B cell (primary cell): ENCODE measurements at regions of chr6 and their contacts with region 1.

Region 1: DNA sequence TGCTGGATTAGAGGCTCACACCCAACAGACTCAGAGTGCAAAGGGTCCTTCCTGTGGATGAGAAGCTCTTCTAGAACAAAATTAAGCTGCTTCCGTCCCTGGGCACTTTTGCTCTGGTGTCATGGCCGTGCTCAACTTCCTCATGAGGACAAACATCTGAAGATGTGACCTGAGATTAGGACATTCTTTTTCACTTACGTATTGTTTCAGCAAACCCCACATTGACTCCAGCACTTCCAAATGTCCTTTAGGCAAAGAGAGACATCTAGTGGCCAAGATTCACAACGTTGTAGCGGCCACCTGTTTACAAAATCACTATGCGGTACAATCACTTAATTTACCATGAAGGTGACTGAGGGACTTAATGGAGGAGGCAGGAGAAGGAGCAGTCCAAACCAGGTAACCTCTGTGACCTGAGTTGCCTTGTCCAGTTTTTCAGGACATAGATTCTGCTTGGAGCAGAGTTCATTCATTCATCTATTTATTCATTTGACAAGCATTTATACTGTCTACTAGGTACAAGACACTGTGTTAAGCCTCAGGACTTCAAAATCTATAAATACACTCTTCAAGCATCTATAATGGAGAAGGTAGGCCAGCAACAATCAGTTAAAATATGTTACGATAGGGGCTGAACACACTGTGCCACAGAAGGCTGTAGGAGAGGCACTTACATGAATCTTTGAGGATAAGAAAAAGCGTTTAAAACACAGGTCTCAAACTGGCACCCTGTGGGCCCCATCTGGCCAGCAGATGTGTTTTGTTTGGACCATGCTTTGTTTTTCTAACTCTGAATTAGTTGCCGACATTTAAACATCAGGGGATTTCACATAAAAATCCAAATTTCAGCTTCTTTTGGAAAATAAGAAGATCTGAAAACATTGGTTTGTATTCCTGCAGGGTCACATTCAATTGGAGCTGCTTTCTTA is 5.6 kb upstream of the ADGRF1 start:
- DNase-seq: peak; percentile 35
- ATAC-seq: peak; percentile 17
- H3K4me3 ChIP-seq: no peak overlapping the region
- H3K4me3 Mint-ChIP-seq: no peak overlapping the region
- H3K27ac ChIP-seq: no peak overlapping the region
- H3K27ac Mint-ChIP-seq: no peak overlapping the region
- H3K4me1 ChIP-seq: no peaks in the 10 kb centered on the region
- H3K4me1 Mint-ChIP-seq: peaks cover 2% of the 10 kb centered on the region
- H3K27me3 ChIP-seq: no peaks in the 10 kb centered on the region
- H3K27me3 Mint-ChIP-seq: peaks cover 11% of the 10 kb centered on the region
- CTCF ChIP-seq: peak; percentile 65

Region 2: DNA sequence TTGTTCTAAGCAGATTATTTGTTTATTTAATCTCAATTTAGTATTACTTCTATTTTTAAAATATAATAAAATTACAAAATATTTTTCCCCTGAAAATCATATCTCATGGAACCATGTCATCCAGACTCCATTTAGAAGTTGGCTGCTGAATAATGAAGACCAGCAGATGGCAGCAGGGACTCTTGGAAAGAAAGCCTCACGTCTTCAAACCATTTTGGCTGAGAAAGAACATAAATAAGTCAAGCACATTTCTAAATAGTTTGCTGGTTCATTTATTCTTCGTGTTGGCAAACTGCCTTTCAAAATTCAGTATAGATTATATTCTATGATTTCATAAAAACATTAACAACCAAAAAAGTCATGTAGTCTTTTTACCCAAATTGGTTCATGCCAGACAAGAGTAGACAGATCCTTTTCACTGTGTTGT is 628.2 kb before region 1 on chr6:
- CTCF ChIA-PET with region 1: no interaction called
- POLR2A ChIA-PET with region 1: no interaction called
- intact Hi-C with region 1: loop called (anchors 5 kb)
- DNase-seq: peak; percentile 40
- ATAC-seq: no peak
- H3K4me3 ChIP-seq: no peak overlapping the region
- H3K4me3 Mint-ChIP-seq: no peak overlapping the region
- H3K27ac ChIP-seq: no peak overlapping the region
- H3K27ac Mint-ChIP-seq: no peak overlapping the region
- H3K4me1 ChIP-seq: no peaks in the 10 kb centered on the region
- H3K4me1 Mint-ChIP-seq: no peaks in the 10 kb centered on the region
- H3K27me3 ChIP-seq: no peaks in the 10 kb centered on the region
- H3K27me3 Mint-ChIP-seq: peaks cover 7% of the 10 kb centered on the region
- CTCF ChIP-seq: peak; percentile 69

Region 3: DNA sequence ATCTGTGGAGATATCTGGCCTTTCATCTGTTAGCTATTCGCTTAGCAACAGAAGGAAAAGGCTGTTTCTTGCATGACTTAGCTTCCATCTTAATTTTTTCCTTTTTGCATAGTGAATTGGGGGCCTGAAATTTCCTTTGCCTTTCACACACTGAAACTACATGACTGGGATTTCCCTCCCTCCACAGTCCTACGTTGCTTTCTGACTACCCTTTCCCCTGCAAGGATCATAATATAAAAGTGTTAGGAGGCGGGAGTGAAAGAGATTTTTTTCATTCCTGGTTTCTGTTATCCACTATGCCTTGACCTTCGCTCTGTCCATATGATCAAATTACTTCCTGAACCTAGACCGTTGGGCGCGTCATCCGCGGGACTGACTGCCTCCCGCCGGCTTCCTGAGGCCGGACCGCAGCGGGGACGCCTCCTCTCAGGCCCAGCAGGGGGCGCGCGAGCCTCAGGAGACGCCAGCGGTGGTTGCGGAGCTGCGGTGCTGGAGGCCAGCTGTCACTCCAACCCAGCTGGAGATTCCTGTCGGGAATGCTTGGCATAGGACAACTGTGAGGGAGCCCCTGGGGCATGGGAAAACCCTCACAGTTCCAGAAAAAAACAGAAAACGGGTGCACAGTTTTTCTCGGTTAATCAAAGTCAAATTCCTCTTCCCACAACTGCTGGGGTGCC is 198.9 kb before region 1 on chr6:
- CTCF ChIA-PET with region 1: no interaction called
- POLR2A ChIA-PET with region 1: no interaction called
- intact Hi-C with region 1: loop called (anchors 10 kb)
- DNase-seq: peak; percentile 55
- ATAC-seq: peak; percentile 66
- H3K4me3 ChIP-seq: no peak overlapping the region
- H3K4me3 Mint-ChIP-seq: peak overlapping the region; percentile 65
- H3K27ac ChIP-seq: no peak overlapping the region
- H3K27ac Mint-ChIP-seq: no peak overlapping the region
- H3K4me1 ChIP-seq: no peaks in the 10 kb centered on the region
- H3K4me1 Mint-ChIP-seq: peaks cover 7% of the 10 kb centered on the region
- H3K27me3 ChIP-seq: peaks cover 0 to 7% (median 0%) of the 10 kb centered on the region in 4 experiments
- H3K27me3 Mint-ChIP-seq: peaks cover 31% of the 10 kb centered on the region
- CTCF ChIP-seq: peak; percentile 84